ENCODE measurements at regions of chr3 and their contacts with region 1.

Region 1: GRCh38 chr3:114056130-114057010 is at the starts of genes CCDC191 and QTRT2:
- DNase-seq: peak; percentile 99
- H3K4me3 ChIP-seq: peak within 1 kb of the TSS; percentile 50 to 88 (median 86)
- H3K27ac ChIP-seq: peak within 1 kb of the TSS; percentile 31
- H3K4me1 ChIP-seq: peaks cover 16% of the 10 kb centered on the region
- H3K27me3 ChIP-seq: no peaks in the 10 kb centered on the region
- CTCF ChIP-seq: no peak
- POLR2A ChIP-seq: peak; percentile 55
- total RNA-seq, gene CCDC191: 3.8 and 4.9 TPM in 2 replicates
- total RNA-seq, gene QTRT2: 29.5 and 42.8 TPM in 2 replicates

Region 2: GRCh38 chr3:113222451-113223086 is 833.8 kb before region 1 on chr3:
- CTCF ChIA-PET with region 1: no interaction called
- POLR2A ChIA-PET with region 1: no interaction called
- dilution Hi-C with region 1: no loop called
- intact Hi-C with region 1: no loop called
- DNase-seq: no peak
- H3K4me3 ChIP-seq: no peak overlapping the region
- H3K27ac ChIP-seq: no peak overlapping the region
- H3K4me1 ChIP-seq: no peaks in the 10 kb centered on the region
- H3K27me3 ChIP-seq: peaks cover 6 to 9% of the 10 kb centered on the region in 2 experiments
- CTCF ChIP-seq: no peak
- POLR2A ChIP-seq: no peak

Region 3: DNA sequence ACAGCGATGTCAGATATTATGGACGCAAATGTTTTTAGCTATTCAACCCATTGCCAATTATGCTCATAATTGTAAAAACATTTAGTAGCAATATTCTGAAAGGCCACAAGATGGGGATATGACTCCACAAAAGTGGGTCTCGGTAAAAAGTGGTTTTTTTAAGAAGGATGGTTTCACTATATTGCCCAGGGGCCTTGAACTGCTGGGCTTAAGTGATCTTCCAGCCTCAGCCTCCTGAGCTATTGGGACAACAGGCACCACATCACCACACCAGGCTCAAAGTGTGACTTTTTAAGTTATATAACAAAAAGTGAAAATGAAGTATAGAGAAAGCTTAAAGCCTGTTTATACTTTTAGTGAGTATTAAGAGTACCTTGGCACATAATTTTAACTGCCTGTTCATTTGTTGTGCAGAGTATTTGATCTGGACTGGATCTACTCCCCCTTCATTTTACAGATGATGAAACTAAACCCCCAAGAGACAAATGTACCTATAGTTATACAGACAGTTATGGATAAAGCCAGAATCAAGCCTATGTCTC is 319.8 kb before region 1 on chr3:
- CTCF ChIA-PET with region 1: interaction called, 4 read pairs
- POLR2A ChIA-PET with region 1: no interaction called
- dilution Hi-C with region 1: no loop called
- intact Hi-C with region 1: loop called (anchors 1 kb)
- DNase-seq: peak; percentile 79
- H3K4me3 ChIP-seq: no peak overlapping the region
- H3K27ac ChIP-seq: no peak overlapping the region
- H3K4me1 ChIP-seq: peaks cover 10% of the 10 kb centered on the region
- H3K27me3 ChIP-seq: no peaks in the 10 kb centered on the region
- CTCF ChIP-seq: peak; percentile 28 to 47
- POLR2A ChIP-seq: no peak

Region 4: GRCh38 chr3:113947372-113948014 is 108.9 kb before region 1 on chr3 and contains the start of gene ZDHHC23:
- CTCF ChIA-PET with region 1: no interaction called
- POLR2A ChIA-PET with region 1: no interaction called
- dilution Hi-C with region 1: no loop called
- intact Hi-C with region 1: loop called (anchors 2 kb)
- DNase-seq: peak; percentile 36
- H3K4me3 ChIP-seq: peak within 1 kb of the TSS; percentile 4 to 63 (median 61)
- H3K27ac ChIP-seq: no peak within 1 kb of the TSS
- H3K4me1 ChIP-seq: peaks cover 7% of the 10 kb centered on the region
- H3K27me3 ChIP-seq: no peaks in the 10 kb centered on the region
- CTCF ChIP-seq: no peak
- POLR2A ChIP-seq: no peak
- total RNA-seq, gene ZDHHC23: 1.9 and 3.2 TPM in 2 replicates

Region 5: DNA sequence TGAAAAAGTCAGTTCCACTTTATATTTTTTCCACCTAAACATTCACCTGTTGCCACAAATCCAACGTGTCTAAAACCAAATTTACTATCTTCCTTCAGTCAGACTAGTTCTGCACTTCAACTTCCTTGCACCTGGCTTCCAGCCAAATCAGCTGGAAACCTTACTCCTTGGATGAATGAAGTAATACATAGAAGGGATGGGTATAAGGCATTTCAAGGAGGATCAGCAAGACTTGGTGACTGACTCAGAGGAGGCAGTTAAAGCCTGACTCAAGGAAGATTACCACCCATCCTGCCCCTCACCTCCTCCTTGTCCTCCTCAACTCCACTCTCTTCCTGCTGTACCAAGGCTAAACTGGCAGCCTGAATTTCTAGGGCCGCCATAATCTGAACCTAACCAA is 37.2 kb after region 1 on chr3:
- CTCF ChIA-PET with region 1: no interaction called
- POLR2A ChIA-PET with region 1: no interaction called
- dilution Hi-C with region 1: no loop called
- intact Hi-C with region 1: loop called (anchors 2 kb)
- DNase-seq: peak; percentile 65
- H3K4me3 ChIP-seq: no peak overlapping the region
- H3K27ac ChIP-seq: peak overlapping the region; percentile 86
- H3K4me1 ChIP-seq: peaks cover 26% of the 10 kb centered on the region
- H3K27me3 ChIP-seq: no peaks in the 10 kb centered on the region
- CTCF ChIP-seq: no peak
- POLR2A ChIP-seq: no peak